ENCODE measurements at regions of chr2 and their contacts with region 1.

Region 1: GRCh38 chr2:66574701-66575624 is 140.0 kb downstream of the MEIS1 start:
- DNase-seq: peak; percentile 91
- ATAC-seq: peak; percentile 42
- H3K4me3 ChIP-seq: peak overlapping the region; percentile 44
- H3K27ac ChIP-seq: peak overlapping the region; percentile 96
- H3K4me1 ChIP-seq: peaks cover 22% of the 10 kb centered on the region
- H3K27me3 ChIP-seq: no peaks in the 10 kb centered on the region
- CTCF ChIP-seq: peak; percentile 69
- POLR2A ChIP-seq: peak; percentile 56; the same call in 1 of the 2 replicates
- RAD21 ChIP-seq: peak; percentile 71

Region 2: GRCh38 chr2:66275984-66276383 is 299.0 kb before region 1 on chr2:
- CTCF ChIA-PET with region 1: no interaction called
- POLR2A ChIA-PET with region 1: no interaction called
- dilution Hi-C with region 1: no loop called
- in situ Hi-C with region 1: no loop called
- intact Hi-C with region 1: no loop called
- DNase-seq: no peak
- ATAC-seq: no peak
- H3K4me3 ChIP-seq: no peak overlapping the region
- H3K27ac ChIP-seq: no peak overlapping the region
- H3K4me1 ChIP-seq: no peaks in the 10 kb centered on the region
- H3K27me3 ChIP-seq: peaks cover 3% of the 10 kb centered on the region; the same call in 1 of the 2 replicates
- CTCF ChIP-seq: 0 out of 2 replicates have a peak, but pooled peaks have one; percentile 1
- POLR2A ChIP-seq: no peak
- RAD21 ChIP-seq: no peak

Region 3: DNA sequence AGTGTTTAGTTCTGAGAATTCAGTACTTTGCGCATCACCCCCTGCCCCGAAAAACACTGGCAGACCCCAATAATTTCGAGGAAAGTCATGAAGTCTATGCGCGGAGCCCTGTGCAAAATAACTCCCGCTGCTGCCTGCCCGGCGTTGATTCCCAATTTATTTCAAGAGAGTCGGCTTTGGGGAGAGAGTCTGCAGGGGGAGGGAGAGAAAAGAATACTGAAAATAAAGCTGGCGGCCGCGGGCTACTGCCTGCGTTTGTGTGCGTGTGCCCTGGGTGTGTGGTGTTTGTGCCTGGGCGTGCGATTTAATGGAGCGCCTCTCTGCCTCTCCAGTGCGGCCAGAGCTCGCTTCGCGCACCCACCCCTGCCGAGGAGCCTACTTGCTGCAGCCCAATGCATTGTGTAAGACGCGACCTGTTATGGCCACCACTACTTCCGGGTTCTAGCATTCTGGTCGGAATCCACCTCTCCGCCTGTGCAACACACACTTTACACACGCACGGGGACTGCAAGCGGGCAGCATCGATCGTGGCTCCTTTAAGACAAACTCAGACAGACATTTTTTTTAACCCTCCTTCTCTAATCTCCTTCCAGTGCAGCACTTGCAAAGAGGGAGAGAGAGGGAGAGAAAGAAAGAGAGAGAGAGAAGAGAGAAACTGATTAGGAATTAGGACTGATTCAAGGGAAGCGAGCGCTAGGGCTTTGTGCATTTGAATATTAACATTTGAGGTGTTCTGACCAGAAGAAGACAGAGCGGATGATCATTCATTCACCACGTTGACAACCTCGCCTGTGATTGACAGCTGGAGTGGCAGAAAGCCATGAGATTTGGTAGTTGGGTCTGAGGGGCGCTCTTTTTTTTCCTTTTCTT is 140.0 kb before region 1 on chr2 and contains the start of gene MEIS1:
- CTCF ChIA-PET with region 1: interaction called, 9 read pairs
- POLR2A ChIA-PET with region 1: interaction called, 6 read pairs
- dilution Hi-C with region 1: no loop called
- in situ Hi-C with region 1: no loop called
- intact Hi-C with region 1: loop called (anchors 2 kb)
- DNase-seq: peak; percentile 100
- ATAC-seq: peak; percentile 50
- H3K4me3 ChIP-seq: peak within 1 kb of the TSS; percentile 99
- H3K27ac ChIP-seq: peak within 1 kb of the TSS; percentile 99
- H3K4me1 ChIP-seq: peaks cover 5% of the 10 kb centered on the region; the same call in 1 of the 2 replicates
- H3K27me3 ChIP-seq: no peaks in the 10 kb centered on the region
- CTCF ChIP-seq: no peak
- POLR2A ChIP-seq: peak; percentile 99
- RAD21 ChIP-seq: peak; percentile 10
- total RNA-seq, gene MEIS1: 157 and 209 TPM in 2 replicates

Region 4: DNA sequence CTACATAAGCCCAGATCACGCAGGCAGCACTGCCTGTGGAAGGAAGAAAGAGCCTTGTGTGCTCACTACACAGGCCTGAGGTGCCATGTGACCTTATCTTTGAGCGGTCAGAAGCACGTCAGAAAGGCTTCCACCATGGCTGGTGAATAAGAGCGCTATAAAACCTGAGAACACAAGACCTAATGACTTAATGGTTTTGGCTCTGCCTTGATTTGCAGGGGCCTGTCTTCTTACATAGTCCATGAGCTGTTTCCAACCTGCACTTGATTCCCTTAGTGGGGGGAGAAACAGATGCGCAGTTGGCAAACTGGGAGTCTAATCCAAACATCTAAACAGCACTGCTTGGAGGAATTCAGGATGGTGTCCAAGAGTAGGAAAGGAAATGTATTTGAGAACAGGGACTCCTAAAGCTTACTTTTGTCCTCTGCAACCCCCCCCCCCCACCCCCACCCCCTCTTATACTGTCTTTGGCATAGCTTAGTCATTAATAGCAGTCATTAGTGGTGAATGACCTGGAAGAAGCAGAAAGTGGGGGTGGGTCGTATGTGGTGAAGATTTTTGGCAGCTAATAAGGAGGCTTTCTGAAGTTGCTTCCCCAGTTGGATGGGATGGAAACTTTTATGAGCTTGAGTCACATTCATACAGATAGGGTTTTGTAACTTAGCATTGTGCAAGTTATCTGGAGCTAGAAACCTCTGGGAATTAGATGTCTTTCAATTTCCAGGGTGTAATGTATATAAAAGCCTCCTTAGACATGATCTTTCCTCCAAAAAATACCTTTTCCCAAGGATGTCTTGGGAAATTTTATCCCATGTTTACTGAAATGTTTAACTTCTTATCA is 314.0 kb after region 1 on chr2:
- CTCF ChIA-PET with region 1: no interaction called
- POLR2A ChIA-PET with region 1: interaction called, 4 read pairs
- dilution Hi-C with region 1: no loop called
- in situ Hi-C with region 1: no loop called
- intact Hi-C with region 1: loop called (anchors 2 kb)
- DNase-seq: peak; percentile 100
- ATAC-seq: peak; percentile 68
- H3K4me3 ChIP-seq: no peak overlapping the region
- H3K27ac ChIP-seq: peak overlapping the region; percentile 100
- H3K4me1 ChIP-seq: peaks cover 9% of the 10 kb centered on the region
- H3K27me3 ChIP-seq: no peaks in the 10 kb centered on the region
- CTCF ChIP-seq: no peak
- POLR2A ChIP-seq: no peak; the same call in none of the 2 replicates
- RAD21 ChIP-seq: peak; percentile 2

Region 5: GRCh38 chr2:67234439-67234838 is 659.5 kb after region 1 on chr2:
- CTCF ChIA-PET with region 1: no interaction called
- POLR2A ChIA-PET with region 1: no interaction called
- dilution Hi-C with region 1: no loop called
- in situ Hi-C with region 1: no loop called
- intact Hi-C with region 1: loop called (anchors 2 kb)
- DNase-seq: peak; percentile 72
- ATAC-seq: peak; percentile 94
- H3K4me3 ChIP-seq: no peak overlapping the region
- H3K27ac ChIP-seq: no peak overlapping the region
- H3K4me1 ChIP-seq: peaks cover 2% of the 10 kb centered on the region; the same call in 1 of the 2 replicates
- H3K27me3 ChIP-seq: no peaks in the 10 kb centered on the region
- CTCF ChIP-seq: peak; percentile 75
- POLR2A ChIP-seq: no peak
- RAD21 ChIP-seq: peak; percentile 86

Region 6: DNA sequence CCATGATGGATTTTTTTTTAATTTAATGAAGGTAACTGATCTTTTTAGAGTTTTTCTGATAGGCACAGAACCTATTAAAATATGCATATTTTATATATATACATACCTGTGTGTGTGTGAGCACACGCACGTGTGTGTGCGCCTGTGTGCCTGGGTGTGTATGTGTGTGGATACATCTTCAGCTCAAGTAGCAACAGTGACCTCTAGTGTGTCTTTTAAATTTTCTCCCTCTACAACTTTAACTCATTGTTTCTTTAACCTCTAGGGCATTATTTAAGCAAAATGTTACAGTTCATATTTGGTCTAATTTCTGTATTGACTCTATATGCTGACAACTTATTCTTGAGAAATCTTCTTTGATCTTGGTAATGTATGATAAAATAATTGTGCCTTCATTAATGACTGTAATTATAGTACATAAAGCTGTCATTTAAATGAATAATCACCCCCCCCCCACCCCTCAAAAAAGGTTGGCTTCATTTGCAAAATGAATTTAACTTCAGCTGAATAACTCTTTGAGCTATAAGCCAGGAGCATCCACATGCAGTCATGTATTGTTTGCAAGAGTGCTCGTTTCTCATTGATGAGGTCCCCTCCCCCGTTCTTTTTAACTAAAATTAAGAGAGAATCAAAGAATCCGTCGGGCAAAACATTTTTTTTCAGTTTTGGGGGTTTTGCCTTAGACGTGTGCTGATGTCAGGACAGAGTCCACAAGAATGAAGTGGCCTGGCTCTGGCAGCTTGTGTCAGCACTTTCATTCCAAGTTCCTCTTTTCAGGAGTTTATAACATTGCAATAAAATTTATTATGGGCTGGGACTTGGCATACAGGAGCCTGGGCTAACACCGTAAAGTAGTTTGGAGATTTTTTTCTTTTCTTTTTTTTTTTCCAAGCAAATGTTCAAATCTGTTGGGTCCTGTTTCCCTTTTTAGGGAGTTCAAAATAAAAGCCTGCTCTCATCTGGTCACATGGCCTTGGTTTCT is 902.1 kb after region 1 on chr2:
- CTCF ChIA-PET with region 1: no interaction called
- POLR2A ChIA-PET with region 1: no interaction called
- dilution Hi-C with region 1: no loop called
- in situ Hi-C with region 1: loop called (anchors 25 kb)
- intact Hi-C with region 1: loop called (anchors 5 kb)
- DNase-seq: peak; percentile 81
- ATAC-seq: peak; percentile 69
- H3K4me3 ChIP-seq: no peak overlapping the region
- H3K27ac ChIP-seq: no peak overlapping the region
- H3K4me1 ChIP-seq: no peaks in the 10 kb centered on the region
- H3K27me3 ChIP-seq: no peaks in the 10 kb centered on the region
- CTCF ChIP-seq: peak; percentile 68
- POLR2A ChIP-seq: no peak
- RAD21 ChIP-seq: peak; percentile 81

Region 7: GRCh38 chr2:68031542-68032160 is 1456.7 kb after region 1 on chr2:
- CTCF ChIA-PET with region 1: no interaction called
- POLR2A ChIA-PET with region 1: no interaction called
- dilution Hi-C with region 1: no loop called
- in situ Hi-C with region 1: loop called (anchors 25 kb)
- intact Hi-C with region 1: loop called (anchors 5 kb)
- DNase-seq: peak; percentile 70
- ATAC-seq: peak; percentile 89
- H3K4me3 ChIP-seq: no peak overlapping the region
- H3K27ac ChIP-seq: no peak overlapping the region
- H3K4me1 ChIP-seq: no peaks in the 10 kb centered on the region; the same call in 1 of the 2 replicates
- H3K27me3 ChIP-seq: no peaks in the 10 kb centered on the region
- CTCF ChIP-seq: peak; percentile 79
- POLR2A ChIP-seq: no peak
- RAD21 ChIP-seq: peak; percentile 89